ENCODE measurements at regions of chr9 and their contacts with region 1.

Region 1: DNA sequence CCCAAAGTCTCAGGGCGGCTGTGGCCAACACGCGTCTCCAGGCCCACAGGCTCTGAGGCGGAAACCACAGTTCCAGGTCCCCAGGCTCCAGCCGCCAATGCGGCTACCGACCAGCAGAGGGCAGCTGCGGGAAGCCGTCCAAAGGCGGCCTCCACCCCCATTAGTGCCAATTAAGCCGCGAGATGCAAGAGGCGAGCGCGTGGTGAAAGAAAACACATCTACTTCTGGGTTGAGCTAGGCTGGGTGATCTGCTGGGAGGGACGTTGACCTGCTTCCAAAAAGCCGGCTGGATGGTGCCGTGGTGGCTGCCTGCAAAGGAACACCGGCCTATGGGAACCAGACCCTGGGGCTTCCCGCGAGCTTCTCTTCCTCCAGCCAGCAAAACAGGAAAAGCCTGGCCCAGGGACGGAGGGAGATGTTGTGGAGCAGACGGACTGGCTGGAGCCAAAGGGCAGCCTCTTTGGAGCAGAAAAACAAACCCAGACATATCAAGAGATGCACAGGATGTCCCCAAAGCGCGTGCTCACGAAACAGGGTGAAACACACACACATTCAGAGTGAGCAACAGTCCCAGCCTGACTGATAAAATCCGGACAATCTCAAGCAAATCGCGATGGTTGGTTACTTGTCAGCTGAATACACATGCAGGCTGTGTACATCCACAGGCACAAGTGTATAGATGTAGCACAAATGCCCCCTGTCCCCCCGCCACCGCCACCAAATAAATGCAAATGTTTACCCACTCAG is 187.1 kb upstream of the BRINP1 start:
- DNase-seq: peak; percentile 63 to 86 (median 77)
- H3K4me3 ChIP-seq: peak overlapping the region in 58 of 59 donors; percentile 7 to 68 (median 45)
- H3K27ac ChIP-seq: peak overlapping the region in 42 of 59 donors; percentile 11 to 81 (median 52)
- H3K27me3 ChIP-seq: no peaks in the 10 kb centered on the region
- CTCF ChIP-seq: peak; percentile 78 to 98 (median 94)

Region 2: GRCh38 chr9:119370816-119371215 is 185.5 kb before region 1 on chr9:
- intact Hi-C with region 1: loop called in 1 of 2 experiments (anchors 10 kb)
- DNase-seq: peak in 2 of 10 donors; percentile 40 to 52
- H3K4me3 ChIP-seq: peak overlapping the region in 5 of 59 donors; percentile 6 to 80 (median 17)
- H3K27ac ChIP-seq: peak overlapping the region in 29 of 59 donors; percentile 2 to 96 (median 82)
- H3K27me3 ChIP-seq: peaks cover 0 to 29% (median 8%) of the 10 kb centered on the region in 45 donors
- CTCF ChIP-seq: peak in 3 of 56 donors; percentile 7 to 32 (median 11)

Region 3: DNA sequence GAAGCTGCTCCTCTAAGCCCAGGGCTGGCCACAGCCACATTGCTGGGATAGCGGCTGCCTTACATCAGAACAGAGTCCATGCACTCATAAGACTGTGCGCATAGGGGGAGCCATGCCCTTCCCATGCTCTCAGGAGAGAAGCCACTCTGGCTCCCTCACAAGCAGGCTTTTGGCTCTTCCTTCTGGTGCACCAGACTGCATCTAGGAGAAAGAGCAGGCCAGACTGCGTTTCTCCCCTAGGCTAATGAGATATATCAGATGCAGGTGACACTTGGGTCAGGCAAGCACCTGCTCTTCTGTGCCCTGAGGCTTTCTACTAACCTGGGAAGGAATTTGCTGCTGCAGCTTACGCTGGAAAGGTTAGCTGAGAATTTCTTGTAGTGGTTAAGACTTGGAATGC is 143.9 kb before region 1 on chr9:
- intact Hi-C with region 1: no loop called
- DNase-seq: peak in 1 of 10 donors; percentile 30
- H3K4me3 ChIP-seq: no peak overlapping the region
- H3K27ac ChIP-seq: no peak overlapping the region
- H3K27me3 ChIP-seq: no peaks in the 10 kb centered on the region
- CTCF ChIP-seq: no peak

Region 4: GRCh38 chr9:120353506-120353905 is 797.2 kb after region 1 on chr9:
- intact Hi-C with region 1: loop called in 1 of 2 experiments (anchors 5 kb)
- DNase-seq: no peak
- H3K4me3 ChIP-seq: no peak overlapping the region
- H3K27ac ChIP-seq: no peak overlapping the region
- H3K27me3 ChIP-seq: no peaks in the 10 kb centered on the region
- CTCF ChIP-seq: no peak